ENCODE measurements at regions of chr1 and their contacts with region 1.

Region 1: DNA sequence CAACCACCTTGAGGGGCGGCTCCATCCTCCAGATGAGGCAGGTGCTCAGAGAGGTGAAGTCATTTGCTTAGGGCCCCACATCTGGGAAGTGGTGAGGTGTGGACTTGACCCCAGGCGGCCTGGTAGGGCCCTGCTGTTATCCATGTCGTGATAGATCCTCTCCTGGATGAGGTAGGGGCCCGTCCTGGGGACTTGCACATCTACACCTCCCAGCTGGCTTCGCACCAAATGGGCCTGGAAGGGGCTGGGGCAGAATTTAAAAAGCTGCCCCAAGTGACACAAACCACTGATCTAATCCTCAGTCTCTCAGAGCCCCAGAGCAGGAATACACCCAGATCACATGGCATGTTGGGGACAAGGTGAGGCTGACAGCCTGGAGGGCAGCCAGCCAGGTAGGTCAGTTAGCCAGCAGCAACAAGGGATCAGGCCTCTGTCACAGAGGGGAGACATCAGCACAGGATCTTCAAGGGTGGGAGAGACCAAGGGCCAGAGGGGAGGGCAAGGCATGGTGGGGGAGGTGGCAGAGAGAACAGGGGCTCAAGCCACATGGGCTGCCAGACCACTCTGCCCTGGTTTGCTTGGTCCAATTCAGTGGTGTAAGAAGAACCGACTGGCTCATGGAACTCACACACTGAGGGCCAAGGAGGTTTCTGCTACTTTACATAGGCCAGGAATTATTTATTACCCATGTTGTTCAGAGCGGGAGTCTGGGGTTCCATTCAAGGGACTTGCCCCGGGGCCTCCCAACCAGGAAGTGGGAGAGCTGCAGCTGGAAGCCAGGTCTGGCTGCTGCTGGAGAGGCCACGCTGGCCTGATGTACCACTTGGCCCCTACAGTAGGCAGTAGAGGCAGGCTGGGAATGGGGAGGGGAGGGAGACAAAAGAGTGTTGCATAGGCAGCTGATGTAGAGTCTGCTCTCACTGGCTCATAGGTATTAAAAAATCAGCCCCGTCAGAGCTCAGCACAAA is 12.1 kb downstream of the LRP8 start:
- DNase-seq: no peak
- H3K4me3 ChIP-seq: no peak overlapping the region
- H3K27ac ChIP-seq: no peak overlapping the region
- H3K4me1 ChIP-seq: peaks cover 0 to 12% (median 4%) of the 10 kb centered on the region in 4 experiments; a peak in 4 of 7 replicates
- H3K27me3 ChIP-seq: no peaks in the 10 kb centered on the region
- CTCF ChIP-seq: peak; percentile 28 to 55 (median 52); a peak in 3 of 4 replicates
- EP300 ChIP-seq: no peak
- POLR2A ChIP-seq: no peak
- RAD21 ChIP-seq: peak in 1 of 2 experiments; percentile 19; a peak in 2 of 4 replicates

Region 2: DNA sequence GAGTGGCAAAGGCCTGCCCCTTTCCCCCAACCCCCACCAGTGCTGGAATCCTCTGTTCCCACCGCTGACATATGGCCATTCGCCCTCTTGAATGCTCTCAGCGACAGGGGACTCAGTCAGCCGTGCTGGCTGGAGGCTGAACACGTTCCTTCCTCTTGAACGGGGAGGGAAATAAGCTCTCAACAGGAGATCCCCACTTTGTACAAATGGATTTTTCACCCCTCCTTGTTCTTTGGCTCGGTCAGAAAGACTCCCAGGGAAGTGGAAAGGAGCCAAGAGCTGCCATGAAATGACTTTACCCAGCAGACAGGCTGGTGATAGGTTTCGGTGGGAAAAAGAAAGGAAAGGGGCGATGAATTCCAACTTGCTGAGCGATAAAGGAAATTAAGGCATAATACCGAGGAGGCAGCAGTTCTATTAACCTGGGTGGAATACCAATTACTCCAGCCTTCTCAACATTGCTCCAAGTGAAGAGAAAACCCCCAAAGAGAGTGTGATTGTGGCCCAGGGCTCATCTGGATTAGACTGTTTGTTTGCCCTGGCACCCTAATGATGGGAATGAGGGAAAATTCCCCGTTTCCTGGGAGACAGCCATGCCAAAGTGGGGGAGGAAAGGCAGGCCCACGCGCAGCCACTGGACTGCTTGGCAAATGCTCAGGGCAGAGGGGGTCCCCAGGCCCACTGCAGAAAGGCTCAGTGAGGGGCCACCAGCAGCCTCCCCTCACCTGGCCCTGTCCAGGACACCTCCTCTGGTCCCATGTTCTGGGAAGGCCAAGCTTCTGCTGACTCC is 11.8 kb before region 1 on chr1:
- CTCF ChIA-PET with region 1: interaction called, 12 read pairs
- POLR2A ChIA-PET with region 1: interaction called, 17 read pairs
- DNase-seq: no peak
- H3K4me3 ChIP-seq: no peak overlapping the region
- H3K27ac ChIP-seq: 0 out of 2 replicates have a peak overlapping the region, but pooled peaks have one; percentile 34
- H3K4me1 ChIP-seq: peaks cover 0 to 9% (median 6%) of the 10 kb centered on the region in 4 experiments; a peak in 5 of 7 replicates
- H3K27me3 ChIP-seq: no peaks in the 10 kb centered on the region
- CTCF ChIP-seq: no peak
- EP300 ChIP-seq: no peak
- POLR2A ChIP-seq: no peak
- RAD21 ChIP-seq: no peak

Region 3: DNA sequence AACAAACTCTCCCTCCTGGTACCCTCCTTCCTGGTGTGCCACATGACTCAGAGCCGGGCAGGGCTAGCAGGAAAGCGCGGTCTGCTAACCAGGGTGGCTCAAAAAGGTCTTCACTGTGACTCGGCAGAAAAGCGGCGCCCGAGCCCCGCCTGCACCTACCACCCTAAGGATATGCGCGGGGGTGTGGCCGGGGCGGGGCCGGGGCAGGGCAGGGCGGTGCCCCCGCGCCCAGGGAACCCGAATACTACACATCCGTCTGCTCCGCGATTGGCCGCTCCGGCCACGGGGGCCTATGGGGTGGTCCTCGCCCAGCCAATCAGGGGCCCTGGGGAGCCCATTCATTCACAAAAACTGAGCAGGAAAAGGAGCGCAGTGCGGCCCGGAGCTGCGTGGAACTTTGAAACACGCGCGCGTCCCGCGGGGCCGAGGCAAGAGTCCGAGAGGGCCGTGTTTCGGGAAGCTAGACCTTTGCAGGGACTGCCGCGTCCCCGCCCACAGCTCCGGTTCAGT is 10.4 kb after region 1 on chr1:
- CTCF ChIA-PET with region 1: interaction called, 7 read pairs
- POLR2A ChIA-PET with region 1: interaction called, 15 read pairs
- DNase-seq: peak; percentile 83 to 93
- H3K4me3 ChIP-seq: peak overlapping the region; percentile 74 to 85 (median 80)
- H3K27ac ChIP-seq: peak overlapping the region; percentile 78; the same call in 1 of the 2 replicates
- H3K4me1 ChIP-seq: peaks cover 4 to 15% (median 9%) of the 10 kb centered on the region in 4 experiments
- H3K27me3 ChIP-seq: no peaks in the 10 kb centered on the region
- CTCF ChIP-seq: no peak
- EP300 ChIP-seq: no peak
- POLR2A ChIP-seq: peak in 1 of 2 experiments; percentile 76; a peak in 2 of 3 replicates
- RAD21 ChIP-seq: no peak

Measured in H1 (cell line).